ENCODE measurements at regions of chr2 and their contacts with region 1.

Region 1: GRCh38 chr2:191637182-191638078 is 40.5 kb upstream of the NABP1 start:
- DNase-seq: peak; percentile 81
- H3K4me3 Mint-ChIP-seq: peak overlapping the region; percentile 78
- H3K27ac Mint-ChIP-seq: peak overlapping the region; percentile 90
- H3K4me1 Mint-ChIP-seq: peaks cover 61% of the 10 kb centered on the region
- H3K27me3 Mint-ChIP-seq: peaks cover 10% of the 10 kb centered on the region

Region 2: DNA sequence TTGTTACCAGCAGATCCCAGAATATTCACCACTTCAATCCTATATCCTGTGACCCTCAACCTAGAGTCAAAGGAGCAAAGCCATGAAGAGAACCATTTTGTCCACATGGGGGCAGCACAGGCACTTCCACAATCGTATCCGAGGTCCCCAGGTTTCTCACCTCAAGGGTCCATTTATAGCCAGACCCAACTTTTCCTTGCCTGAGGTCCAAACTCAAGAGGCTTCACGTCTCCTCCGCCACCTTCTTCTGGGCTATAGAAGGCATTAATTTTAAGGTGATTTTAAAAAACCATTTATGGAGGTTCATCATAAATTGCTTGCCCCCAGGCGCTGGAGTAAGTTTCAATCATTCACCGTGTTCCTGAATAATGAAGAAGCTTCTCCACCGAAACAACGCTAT is 71.1 kb before region 1 on chr2:
- intact Hi-C with region 1: loop called (anchors 1 kb)
- DNase-seq: peak; percentile 89
- H3K4me3 Mint-ChIP-seq: no peak overlapping the region
- H3K27ac Mint-ChIP-seq: no peak overlapping the region
- H3K4me1 Mint-ChIP-seq: peaks cover 29% of the 10 kb centered on the region
- H3K27me3 Mint-ChIP-seq: peaks cover 59% of the 10 kb centered on the region

Region 3: DNA sequence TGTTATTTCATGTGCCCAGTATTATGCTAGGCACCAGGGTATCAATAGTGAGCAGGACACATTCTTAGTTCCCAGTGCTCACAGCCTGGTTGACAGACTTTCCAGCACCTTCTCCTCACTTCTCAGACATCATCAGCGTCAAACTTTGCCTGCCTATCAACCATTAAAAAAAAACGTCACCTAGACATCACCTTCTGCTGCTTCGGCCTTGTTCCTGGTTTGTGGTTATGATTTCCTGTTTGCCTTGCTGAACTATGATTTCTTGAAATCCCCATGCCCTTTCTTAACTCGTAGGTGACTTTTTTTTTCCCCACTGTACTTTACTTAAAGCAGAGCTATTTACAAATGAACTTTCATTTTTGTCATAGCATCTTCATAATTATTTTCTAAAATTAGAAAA is 19.9 kb before region 1 on chr2:
- intact Hi-C with region 1: loop called (anchors 1 kb)
- DNase-seq: peak; percentile 89
- H3K4me3 Mint-ChIP-seq: peak overlapping the region; percentile 55
- H3K27ac Mint-ChIP-seq: peak overlapping the region; percentile 85
- H3K4me1 Mint-ChIP-seq: peaks cover 48% of the 10 kb centered on the region
- H3K27me3 Mint-ChIP-seq: no peaks in the 10 kb centered on the region

Region 4: GRCh38 chr2:191625016-191625415 is 12.4 kb before region 1 on chr2:
- intact Hi-C with region 1: loop called (anchors 1 kb)
- DNase-seq: peak; percentile 82
- H3K4me3 Mint-ChIP-seq: peak overlapping the region; percentile 29
- H3K27ac Mint-ChIP-seq: peak overlapping the region; percentile 29
- H3K4me1 Mint-ChIP-seq: peaks cover 43% of the 10 kb centered on the region
- H3K27me3 Mint-ChIP-seq: no peaks in the 10 kb centered on the region

Region 5: GRCh38 chr2:191650896-191651773 is 13.7 kb after region 1 on chr2:
- intact Hi-C with region 1: loop called (anchors 2 kb)
- DNase-seq: peak; percentile 54
- H3K4me3 Mint-ChIP-seq: no peak overlapping the region
- H3K27ac Mint-ChIP-seq: peak overlapping the region; percentile 18
- H3K4me1 Mint-ChIP-seq: peaks cover 11% of the 10 kb centered on the region
- H3K27me3 Mint-ChIP-seq: no peaks in the 10 kb centered on the region

Region 6: DNA sequence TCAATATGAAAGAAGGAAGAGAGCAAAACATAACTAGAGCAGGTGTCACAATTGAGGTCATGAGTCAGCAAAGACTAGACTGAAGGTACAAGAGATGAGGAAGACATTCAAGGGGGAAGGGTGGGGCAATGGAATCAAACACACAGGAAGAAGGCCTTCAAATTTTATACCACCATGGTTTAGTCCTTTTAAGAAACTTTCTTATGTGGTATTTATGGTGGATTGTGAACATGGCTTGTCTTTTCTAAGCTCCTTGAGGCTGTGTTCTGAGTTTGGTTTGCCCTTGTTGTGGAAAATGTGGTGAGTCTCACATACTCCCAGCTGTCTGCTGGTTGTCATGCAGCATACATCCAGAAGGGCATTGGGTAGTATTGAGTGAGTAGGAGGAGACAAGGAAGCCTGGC is 102.6 kb after region 1 on chr2:
- intact Hi-C with region 1: loop called (anchors 2 kb)
- DNase-seq: peak; percentile 91
- H3K4me3 Mint-ChIP-seq: peak overlapping the region; percentile 16
- H3K27ac Mint-ChIP-seq: peak overlapping the region; percentile 82
- H3K4me1 Mint-ChIP-seq: peaks cover 13% of the 10 kb centered on the region
- H3K27me3 Mint-ChIP-seq: peaks cover 30% of the 10 kb centered on the region

Region 7: DNA sequence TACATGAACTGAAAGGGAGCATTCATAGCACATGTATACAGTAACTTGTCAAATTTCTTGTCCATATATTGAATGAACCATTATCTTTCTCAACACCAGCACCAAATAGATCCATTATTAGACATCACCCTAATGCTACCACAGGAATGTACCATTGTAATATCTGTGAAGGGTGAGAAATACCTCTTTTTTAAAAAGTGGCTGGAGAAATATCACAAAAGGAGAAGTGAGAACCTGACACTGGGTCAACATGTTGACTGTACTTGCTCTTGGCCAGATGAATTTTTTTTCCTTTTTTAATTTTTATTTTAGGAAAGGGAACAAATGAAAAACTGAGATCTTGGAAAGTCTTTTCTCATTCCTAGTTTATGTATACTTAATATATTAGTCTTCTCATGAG is 146.0 kb after region 1 on chr2:
- intact Hi-C with region 1: no loop called
- DNase-seq: no peak
- H3K4me3 Mint-ChIP-seq: no peak overlapping the region
- H3K27ac Mint-ChIP-seq: no peak overlapping the region
- H3K4me1 Mint-ChIP-seq: no peaks in the 10 kb centered on the region
- H3K27me3 Mint-ChIP-seq: peaks cover 15% of the 10 kb centered on the region

Region 8: DNA sequence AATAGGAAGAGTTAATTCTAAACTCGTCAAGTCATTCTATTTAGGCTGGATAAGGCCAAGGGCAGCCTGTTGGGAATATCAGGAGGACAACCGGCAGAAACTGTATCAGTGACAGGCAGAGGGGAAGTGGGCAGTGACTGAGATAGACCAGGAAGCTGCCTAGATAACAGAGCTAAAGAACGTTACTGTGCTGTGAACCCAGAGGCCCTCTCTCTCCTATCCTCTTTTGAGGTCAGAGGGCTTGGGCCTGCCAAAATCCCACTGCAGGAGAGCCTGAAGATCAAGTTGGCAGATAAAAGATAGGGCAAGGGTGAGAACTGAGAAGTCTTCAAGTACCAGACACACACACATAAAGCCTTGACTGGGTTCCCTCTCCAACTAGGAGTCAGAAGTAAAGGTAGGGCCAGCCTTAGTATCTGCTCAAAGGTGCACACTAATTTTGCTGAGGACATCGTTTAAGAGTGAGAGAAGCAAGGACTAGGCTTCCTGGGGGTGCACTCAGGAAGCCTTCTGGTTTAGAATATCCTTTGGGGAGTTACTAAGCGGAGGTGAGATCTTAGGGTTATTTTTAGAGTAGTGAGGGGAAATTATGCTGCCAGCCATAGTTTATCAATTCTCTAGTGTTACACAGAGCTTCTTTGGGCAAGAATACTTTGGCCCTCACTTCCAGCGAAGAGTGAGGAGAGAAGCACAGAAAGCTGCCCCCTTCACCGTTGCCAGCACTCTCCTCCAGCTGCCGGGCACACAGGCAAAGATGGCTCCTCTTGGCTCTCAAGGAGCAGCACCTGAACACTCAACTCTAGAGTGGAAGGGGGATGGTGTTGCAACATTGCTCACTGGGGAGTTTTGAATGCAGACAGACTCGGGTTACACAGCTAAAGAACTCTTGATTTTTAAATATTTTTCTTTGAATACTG is 199.7 kb after region 1 on chr2:
- intact Hi-C with region 1: no loop called
- DNase-seq: no peak
- H3K4me3 Mint-ChIP-seq: no peak overlapping the region
- H3K27ac Mint-ChIP-seq: no peak overlapping the region
- H3K4me1 Mint-ChIP-seq: peaks cover 1% of the 10 kb centered on the region
- H3K27me3 Mint-ChIP-seq: peaks cover 37% of the 10 kb centered on the region

Measured in activated CD4-positive, alpha-beta T cell treated with anti-CD3 and anti-CD28 coated beads, Interleukin-2, amount 10 ng/mL, durations not matched to agents 24 days and 14 days (primary cell).